ENCODE measurements at regions of chr11 and their contacts with region 1.

Region 1: DNA sequence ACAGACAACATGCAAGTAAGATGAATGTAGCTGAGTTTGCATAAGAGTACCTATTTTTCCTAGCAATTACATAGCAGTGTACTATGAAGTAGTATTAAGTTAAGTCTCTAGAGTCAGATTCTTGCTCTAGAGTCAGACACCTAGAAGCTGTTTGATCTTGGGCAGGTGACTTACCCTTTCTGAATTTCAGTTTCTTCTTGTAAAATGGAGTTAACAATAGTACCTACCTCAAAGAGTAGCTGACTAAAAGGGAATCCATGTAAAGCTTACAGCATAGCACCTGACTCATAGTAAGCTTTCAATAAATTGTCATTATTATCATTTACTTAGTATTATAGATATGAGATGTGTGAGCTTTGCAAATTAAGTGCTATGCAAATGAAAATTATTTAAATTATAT is 47.8 kb upstream of the PTPRJ start:
- DNase-seq: no peak
- ATAC-seq: no peak

Region 2: GRCh38 chr11:47819743-47820142 is 112.8 kb before region 1 on chr11:
- intact Hi-C with region 1: no loop called
- DNase-seq: no peak
- ATAC-seq: no peak

Region 3: GRCh38 chr11:47886096-47886495 is 46.4 kb before region 1 on chr11:
- intact Hi-C with region 1: no loop called
- DNase-seq: no peak
- ATAC-seq: peak; percentile 27

Region 4: GRCh38 chr11:48111891-48112290 is 179.3 kb after region 1 on chr11:
- intact Hi-C with region 1: loop called (anchors 2 kb)
- DNase-seq: no peak
- ATAC-seq: peak; percentile 9

Region 5: DNA sequence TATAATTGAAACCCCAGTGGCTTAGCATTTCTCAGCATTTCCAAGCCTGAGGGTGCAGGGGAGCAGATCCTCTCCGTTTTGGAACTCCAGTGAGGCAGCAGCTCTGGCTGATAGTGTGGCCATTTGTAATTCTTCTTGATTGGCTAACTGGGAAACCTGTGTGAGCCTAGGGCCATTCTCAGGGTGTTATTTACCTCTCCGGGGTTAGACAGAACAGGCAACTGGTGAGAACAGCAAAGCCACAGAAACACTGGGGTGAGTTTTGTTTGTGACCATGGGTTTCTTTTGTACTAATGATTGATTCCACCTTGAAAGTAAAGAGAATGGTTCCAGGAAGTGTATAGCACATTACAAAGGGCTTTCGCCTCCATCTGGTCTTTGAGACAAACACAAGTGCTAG is 310.0 kb after region 1 on chr11:
- intact Hi-C with region 1: no loop called
- DNase-seq: no peak
- ATAC-seq: no peak

Measured in left ventricle myocardium superior (tissue), 1 donor.